ENCODE measurements at regions of chr14 and their contacts with region 1.

Region 1: GRCh38 chr14:90399541-90400444 is 3.0 kb downstream of the CALM1 start:
- DNase-seq: peak; percentile 78
- H3K4me3 ChIP-seq: peak overlapping the region; percentile 40 to 98 (median 91)
- H3K27ac ChIP-seq: peak overlapping the region; percentile 71
- H3K4me1 ChIP-seq: peaks cover 37% of the 10 kb centered on the region
- H3K27me3 ChIP-seq: no peaks in the 10 kb centered on the region
- CTCF ChIP-seq: peak; percentile 100

Region 2: DNA sequence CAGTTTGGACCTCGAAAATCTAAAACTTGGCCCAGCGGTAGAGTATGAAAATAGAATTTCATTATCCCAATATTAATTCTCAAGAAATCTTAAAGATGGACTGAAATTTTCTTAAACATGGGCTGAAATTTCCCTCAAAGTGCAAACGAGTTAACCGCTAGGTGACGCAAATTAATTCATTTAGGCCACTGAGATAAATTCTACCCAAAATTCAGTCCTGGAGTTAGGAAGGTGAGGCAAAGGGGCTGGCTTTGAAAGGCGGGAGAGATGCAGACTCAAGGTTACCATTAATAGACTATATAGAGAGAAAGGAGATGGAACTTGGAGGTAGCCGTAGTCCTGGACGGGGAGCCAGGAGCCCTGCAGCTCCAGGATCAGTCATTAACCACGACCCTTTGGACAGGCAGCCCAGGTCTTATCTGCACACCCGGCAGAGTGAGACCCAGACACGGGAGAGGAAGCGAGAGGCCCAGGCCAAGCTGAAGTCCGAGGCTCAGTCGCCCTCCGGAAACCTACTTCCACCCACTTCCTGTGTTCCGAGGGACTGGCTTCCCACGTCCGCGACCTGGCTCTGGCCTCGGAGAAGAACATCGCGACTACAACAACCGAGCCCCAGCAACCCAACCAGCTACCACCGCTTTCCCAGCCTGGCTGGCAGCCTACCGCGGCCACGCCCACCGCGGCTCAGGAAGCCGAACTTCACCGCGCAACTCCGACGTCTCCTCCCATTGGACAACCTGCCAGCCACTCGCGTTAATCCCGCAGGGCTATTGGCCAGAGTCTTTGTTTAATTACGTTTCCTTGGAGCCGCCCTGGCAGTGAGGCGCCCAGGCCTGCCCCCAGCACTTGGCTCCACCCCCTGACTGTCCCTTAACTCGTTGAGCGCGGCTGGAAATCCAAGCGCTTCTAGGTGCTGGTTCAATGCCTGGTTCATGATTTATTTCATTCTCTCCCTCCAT is 445.4 kb before region 1 on chr14 and contains the start of gene EFCAB11:
- CTCF ChIA-PET with region 1: no interaction called
- dilution Hi-C with region 1: no loop called
- in situ Hi-C with region 1: no loop called
- intact Hi-C with region 1: loop called (anchors 10 kb)
- DNase-seq: peak; percentile 99
- H3K4me3 ChIP-seq: peak within 1 kb of the TSS; percentile 46 to 92 (median 69)
- H3K27ac ChIP-seq: peak within 1 kb of the TSS; percentile 88
- H3K4me1 ChIP-seq: peaks cover 25% of the 10 kb centered on the region
- H3K27me3 ChIP-seq: no peaks in the 10 kb centered on the region
- CTCF ChIP-seq: peak; percentile 18 to 30
- total RNA-seq, gene EFCAB11: 4.0 to 13.8 TPM

Region 3: GRCh38 chr14:90383075-90383730 is 16.6 kb before region 1 on chr14:
- CTCF ChIA-PET with region 1: interaction called, 3 read pairs
- dilution Hi-C with region 1: no loop called
- in situ Hi-C with region 1: no loop called
- intact Hi-C with region 1: loop called (anchors 1 kb)
- DNase-seq: peak; percentile 99
- H3K4me3 ChIP-seq: peak overlapping the region; percentile 57 to 67 (median 65)
- H3K27ac ChIP-seq: peak overlapping the region; percentile 97
- H3K4me1 ChIP-seq: peaks cover 23% of the 10 kb centered on the region
- H3K27me3 ChIP-seq: no peaks in the 10 kb centered on the region
- CTCF ChIP-seq: no peak

Region 4: DNA sequence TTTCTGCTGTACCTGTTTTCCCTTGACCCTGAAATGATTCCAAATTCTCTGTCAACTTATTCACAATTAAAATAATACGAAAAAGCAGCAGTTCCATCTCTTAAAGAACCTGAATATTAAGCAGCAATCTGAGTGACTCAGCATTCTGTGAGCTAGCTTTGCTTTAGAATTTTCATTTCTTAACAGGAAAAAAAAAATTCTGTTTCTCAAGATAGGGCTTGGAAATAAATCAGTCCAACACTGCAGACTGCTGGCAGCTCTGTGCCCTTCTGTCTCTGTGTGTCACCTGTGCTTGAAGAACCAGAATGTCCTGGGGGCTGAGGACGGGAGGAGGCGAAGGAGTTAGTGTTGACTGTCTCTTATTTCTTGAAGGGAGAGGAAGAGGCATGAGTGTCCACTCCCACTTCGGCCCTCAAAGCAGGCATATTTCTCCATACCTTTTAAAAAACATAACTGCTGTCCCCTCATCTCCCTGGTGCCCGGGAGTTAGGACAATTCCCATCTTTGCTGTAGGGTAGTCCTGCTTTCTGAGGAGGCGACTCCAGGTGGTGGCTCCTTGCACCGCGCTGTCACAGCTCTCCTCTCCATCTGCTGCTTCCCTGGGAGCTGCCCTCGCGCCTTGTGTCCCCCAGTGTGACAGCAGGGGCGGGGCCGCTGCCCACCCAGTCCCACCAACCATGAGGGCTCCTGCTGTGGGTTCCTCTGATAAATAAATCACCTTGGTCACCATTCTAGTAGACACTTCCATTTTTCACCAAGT is 200.1 kb after region 1 on chr14:
- CTCF ChIA-PET with region 1: no interaction called
- dilution Hi-C with region 1: no loop called
- in situ Hi-C with region 1: no loop called
- intact Hi-C with region 1: loop called (anchors 1 kb)
- DNase-seq: peak; percentile 6
- H3K4me3 ChIP-seq: no peak overlapping the region
- H3K27ac ChIP-seq: no peak overlapping the region
- H3K4me1 ChIP-seq: peaks cover 5% of the 10 kb centered on the region
- H3K27me3 ChIP-seq: no peaks in the 10 kb centered on the region
- CTCF ChIP-seq: peak; percentile 3 to 49

Region 5: DNA sequence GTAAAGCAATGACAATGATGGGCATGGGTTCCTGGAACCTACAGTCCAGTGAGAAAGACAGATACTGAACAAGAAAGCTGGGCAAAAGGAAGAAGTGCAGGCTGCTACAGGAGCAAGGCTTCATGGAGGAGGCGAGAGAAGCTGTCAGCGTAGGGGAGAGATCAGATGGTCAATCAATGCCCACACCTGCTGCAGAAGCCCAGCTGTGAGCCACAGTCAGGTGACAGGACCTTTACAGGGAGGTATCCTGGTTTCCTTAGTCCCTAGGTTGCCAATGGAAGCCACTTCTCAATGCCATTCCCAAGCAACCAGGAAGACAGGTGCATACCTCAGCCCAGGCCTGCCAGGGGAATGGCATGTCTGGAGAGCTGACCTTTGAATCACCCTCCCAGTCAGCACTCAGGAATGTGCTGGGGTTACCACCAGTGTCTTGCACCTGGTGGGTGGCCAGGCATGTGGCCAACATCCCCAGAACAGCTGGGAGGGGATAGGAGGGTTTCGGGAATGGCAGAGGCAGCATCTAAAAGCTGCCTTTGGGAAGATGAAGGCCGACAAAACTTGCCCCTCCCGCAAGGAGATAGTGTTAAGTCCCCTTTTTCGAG is 246.2 kb after region 1 on chr14:
- CTCF ChIA-PET with region 1: no interaction called
- dilution Hi-C with region 1: no loop called
- in situ Hi-C with region 1: no loop called
- intact Hi-C with region 1: no loop called
- DNase-seq: peak; percentile 75
- H3K4me3 ChIP-seq: no peak overlapping the region
- H3K27ac ChIP-seq: no peak overlapping the region
- H3K4me1 ChIP-seq: peaks cover 24% of the 10 kb centered on the region
- H3K27me3 ChIP-seq: no peaks in the 10 kb centered on the region
- CTCF ChIP-seq: no peak

Region 6: GRCh38 chr14:90726656-90727055 is 326.9 kb after region 1 on chr14:
- CTCF ChIA-PET with region 1: no interaction called
- dilution Hi-C with region 1: no loop called
- in situ Hi-C with region 1: no loop called
- intact Hi-C with region 1: loop called (anchors 1 kb)
- DNase-seq: peak; percentile 29
- H3K4me3 ChIP-seq: no peak overlapping the region
- H3K27ac ChIP-seq: no peak overlapping the region
- H3K4me1 ChIP-seq: no peaks in the 10 kb centered on the region
- H3K27me3 ChIP-seq: no peaks in the 10 kb centered on the region
- CTCF ChIP-seq: no peak

Region 7: DNA sequence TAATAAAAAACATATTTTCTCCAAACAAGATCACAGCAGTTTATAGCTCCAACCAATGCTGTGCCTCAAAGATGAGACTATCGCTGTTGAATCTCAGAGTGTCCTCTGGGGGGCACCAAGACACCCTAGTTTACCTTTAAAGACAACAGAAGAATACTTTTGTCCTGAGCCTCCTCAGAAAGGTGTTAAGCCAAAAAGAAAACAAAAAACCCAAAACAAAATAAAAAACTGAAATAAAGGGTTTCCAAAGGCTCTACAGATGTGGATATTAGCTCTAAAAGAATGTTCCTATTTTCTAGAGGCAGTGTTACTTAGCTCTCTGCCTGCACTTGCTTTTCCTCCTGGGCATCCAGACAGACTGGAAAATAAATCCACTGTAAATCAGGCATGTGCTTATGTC is 503.3 kb after region 1 on chr14:
- CTCF ChIA-PET with region 1: no interaction called
- dilution Hi-C with region 1: no loop called
- in situ Hi-C with region 1: no loop called
- intact Hi-C with region 1: loop called (anchors 5 kb)
- DNase-seq: peak; percentile 38
- H3K4me3 ChIP-seq: no peak overlapping the region
- H3K27ac ChIP-seq: no peak overlapping the region
- H3K4me1 ChIP-seq: no peaks in the 10 kb centered on the region
- H3K27me3 ChIP-seq: no peaks in the 10 kb centered on the region
- CTCF ChIP-seq: peak; percentile 76 to 86

Measured in mammary epithelial cell (primary cell).